H1 (cell line): ENCODE measurements at regions of chr14 and their contacts with region 1.

Region 1: GRCh38 chr14:26191666-26192065 is 406.2 kb downstream of the NOVA1 start:
- DNase-seq: no peak
- H3K4me3 ChIP-seq: no peak overlapping the region
- H3K27ac ChIP-seq: no peak overlapping the region
- H3K4me1 ChIP-seq: no peaks in the 10 kb centered on the region
- H3K27me3 ChIP-seq: no peaks in the 10 kb centered on the region
- CTCF ChIP-seq: no peak
- EP300 ChIP-seq: no peak
- POLR2A ChIP-seq: no peak
- RAD21 ChIP-seq: no peak

Region 2: DNA sequence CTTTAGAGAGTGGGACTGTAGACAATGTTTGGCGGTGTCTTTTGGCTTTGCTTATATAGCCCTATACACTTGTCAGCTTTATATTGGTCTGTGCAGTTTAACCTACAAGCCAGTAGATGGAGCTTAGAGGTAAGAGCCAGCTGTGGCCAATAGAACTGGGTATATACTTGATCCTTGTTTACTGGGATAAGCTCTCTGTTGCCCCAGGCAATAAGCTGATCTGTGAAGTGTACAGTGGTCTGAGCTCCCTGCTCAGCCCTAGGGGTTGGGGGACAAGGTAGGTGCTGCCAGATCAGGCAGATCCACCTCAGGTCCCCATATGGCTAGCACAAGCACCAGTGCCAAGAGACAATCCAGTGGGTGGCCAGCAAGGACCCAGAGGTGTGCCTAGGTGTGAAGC is 27.9 kb before region 1 on chr14:
- CTCF ChIA-PET with region 1: interaction called, 14 read pairs
- POLR2A ChIA-PET with region 1: no interaction called
- DNase-seq: peak in 1 of 2 experiments; percentile 47
- H3K4me3 ChIP-seq: no peak overlapping the region
- H3K27ac ChIP-seq: no peak overlapping the region
- H3K4me1 ChIP-seq: no peaks in the 10 kb centered on the region
- H3K27me3 ChIP-seq: no peaks in the 10 kb centered on the region
- CTCF ChIP-seq: peak in 2 of 3 experiments; percentile 49 to 59; a peak in 2 of 4 replicates
- EP300 ChIP-seq: no peak
- POLR2A ChIP-seq: no peak
- RAD21 ChIP-seq: peak; percentile 71 to 73